CD8-positive, alpha-beta T cell (primary cell): ENCODE measurements at regions of chr9 and their contacts with region 1.

Region 1: GRCh38 chr9:37415011-37415719 is 7.3 kb upstream of the GRHPR start:
- DNase-seq: peak; percentile 58 to 83 (median 75)
- ATAC-seq: peak; percentile 98
- H3K4me3 ChIP-seq: no peak overlapping the region
- H3K4me3 Mint-ChIP-seq: peak overlapping the region; percentile 69
- H3K27ac ChIP-seq: no peak overlapping the region
- H3K27ac Mint-ChIP-seq: peak overlapping the region; percentile 33
- H3K4me1 ChIP-seq: peaks cover 8% of the 10 kb centered on the region
- H3K4me1 Mint-ChIP-seq: peaks cover 7% of the 10 kb centered on the region
- H3K27me3 ChIP-seq: no peaks in the 10 kb centered on the region
- H3K27me3 Mint-ChIP-seq: no peaks in the 10 kb centered on the region
- CTCF ChIP-seq: peak; percentile 89

Region 2: DNA sequence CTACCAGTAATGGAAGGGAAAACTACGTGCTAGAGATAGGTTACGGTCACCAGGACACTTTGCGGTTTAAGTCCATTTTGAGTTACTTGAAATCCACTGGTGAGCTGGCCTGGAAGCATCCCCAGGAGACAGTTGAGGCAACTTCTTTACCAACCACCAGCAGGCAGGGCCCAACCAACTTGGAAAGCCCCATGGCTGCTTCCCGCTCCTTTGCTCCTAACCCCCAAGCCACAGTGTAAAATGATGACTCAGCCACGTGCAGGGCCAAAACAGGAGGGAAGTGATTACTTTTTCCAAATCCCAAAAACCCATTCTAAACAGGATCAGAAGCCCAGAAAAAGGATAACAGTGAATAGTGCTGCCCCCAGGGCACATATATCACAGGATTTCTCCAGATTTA is 468.5 kb before region 1 on chr9:
- CTCF ChIA-PET with region 1: no interaction called
- POLR2A ChIA-PET with region 1: no interaction called
- intact Hi-C with region 1: no loop called
- DNase-seq: no peak
- ATAC-seq: no peak
- H3K4me3 ChIP-seq: no peak overlapping the region
- H3K4me3 Mint-ChIP-seq: no peak overlapping the region
- H3K27ac ChIP-seq: no peak overlapping the region
- H3K27ac Mint-ChIP-seq: no peak overlapping the region
- H3K4me1 ChIP-seq: no peaks in the 10 kb centered on the region
- H3K4me1 Mint-ChIP-seq: no peaks in the 10 kb centered on the region
- H3K27me3 ChIP-seq: no peaks in the 10 kb centered on the region
- H3K27me3 Mint-ChIP-seq: peaks cover 15% of the 10 kb centered on the region
- CTCF ChIP-seq: no peak

Region 3: GRCh38 chr9:37508834-37509206 is 93.7 kb after region 1 on chr9:
- CTCF ChIA-PET with region 1: interaction called, 12 read pairs
- POLR2A ChIA-PET with region 1: no interaction called
- intact Hi-C with region 1: loop called (anchors 1 to 5 kb)
- DNase-seq: peak in 2 of 9 experiments; percentile 35 to 41
- ATAC-seq: no peak
- H3K4me3 ChIP-seq: no peak overlapping the region
- H3K4me3 Mint-ChIP-seq: no peak overlapping the region
- H3K27ac ChIP-seq: no peak overlapping the region
- H3K27ac Mint-ChIP-seq: peak overlapping the region; percentile 24
- H3K4me1 ChIP-seq: no peaks in the 10 kb centered on the region
- H3K4me1 Mint-ChIP-seq: peaks cover 12% of the 10 kb centered on the region
- H3K27me3 ChIP-seq: no peaks in the 10 kb centered on the region
- H3K27me3 Mint-ChIP-seq: no peaks in the 10 kb centered on the region
- CTCF ChIP-seq: no peak